ENCODE measurements at regions of chr19 and their contacts with region 1.

Region 1: GRCh38 chr19:41206926-41207750 is 11.9 kb upstream of the AXL start:
- DNase-seq: no peak
- H3K4me3 ChIP-seq: no peak overlapping the region
- CTCF ChIP-seq: no peak

Region 2: DNA sequence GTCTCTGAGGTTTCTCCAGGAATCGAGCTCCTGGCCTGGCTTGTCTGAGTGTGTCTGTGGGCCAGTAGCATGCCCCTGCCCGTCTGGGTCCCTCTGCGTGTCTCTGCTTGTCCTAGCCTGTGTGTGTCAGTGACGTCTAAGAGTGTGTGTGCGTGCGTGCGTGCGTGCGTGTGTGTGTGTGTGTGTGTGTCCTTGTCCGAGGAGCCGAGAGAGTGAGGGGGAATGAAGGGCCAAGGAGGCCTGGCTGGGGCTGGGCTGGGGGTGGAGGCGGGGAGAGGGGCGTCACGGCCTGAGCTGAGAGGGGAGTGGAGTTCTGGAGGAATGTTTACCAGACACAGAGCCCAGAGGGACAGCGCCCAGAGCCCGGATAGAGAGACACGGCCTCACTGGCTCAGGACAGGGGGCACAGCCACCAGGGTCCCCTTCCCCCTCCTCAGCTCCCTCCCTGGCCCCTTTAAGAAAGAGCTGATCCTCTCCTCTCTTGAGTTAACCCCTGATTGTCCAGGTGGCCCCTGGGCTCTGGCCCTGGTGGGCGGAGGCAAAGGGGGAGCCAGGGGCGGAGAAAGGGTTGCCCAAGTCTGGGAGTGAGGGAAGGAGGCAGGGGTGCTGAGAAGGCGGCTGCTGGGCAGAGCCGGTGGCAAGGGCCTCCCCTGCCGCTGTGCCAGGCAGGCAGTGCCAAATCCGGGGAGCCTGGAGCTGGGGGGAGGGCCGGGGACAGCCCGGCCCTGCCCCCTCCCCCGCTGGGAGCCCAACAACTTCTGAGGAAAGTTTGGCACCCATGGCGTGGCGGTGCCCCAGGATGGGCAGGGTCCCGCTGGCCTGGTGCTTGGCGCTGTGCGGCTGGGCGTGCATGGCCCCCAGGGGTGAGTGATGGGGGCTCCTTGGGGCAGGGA is 11.7 kb after region 1 on chr19 and contains the start of gene AXL:
- CTCF ChIA-PET with region 1: interaction called, 10 read pairs
- POLR2A ChIA-PET with region 1: interaction called, 4 read pairs
- DNase-seq: peak; percentile 63
- H3K4me3 ChIP-seq: peak within 1 kb of the TSS; percentile 90
- CTCF ChIP-seq: no peak

Region 3: DNA sequence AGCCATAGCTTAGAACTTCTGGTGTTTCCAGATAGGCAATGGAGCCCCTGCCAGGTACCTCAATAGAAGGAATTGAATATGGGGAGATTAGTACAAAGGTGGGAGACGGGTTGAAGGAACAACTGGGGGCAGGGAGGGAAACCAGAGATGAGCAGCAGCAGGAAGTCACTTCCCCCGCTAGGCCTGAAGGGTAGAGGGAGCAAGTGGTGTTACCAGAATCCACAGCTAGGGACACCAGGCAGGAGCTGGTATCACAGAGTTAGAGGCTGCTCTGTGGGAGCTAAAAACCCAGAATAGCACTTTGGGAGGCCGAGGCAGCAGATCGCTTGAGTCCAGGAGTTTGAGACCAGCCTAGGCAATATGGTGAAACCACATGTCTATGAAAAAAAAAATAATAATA is 41.8 kb after region 1 on chr19:
- CTCF ChIA-PET with region 1: interaction called, 12 read pairs
- POLR2A ChIA-PET with region 1: interaction called, 3 read pairs
- DNase-seq: no peak
- H3K4me3 ChIP-seq: no peak overlapping the region
- CTCF ChIP-seq: no peak

Region 4: DNA sequence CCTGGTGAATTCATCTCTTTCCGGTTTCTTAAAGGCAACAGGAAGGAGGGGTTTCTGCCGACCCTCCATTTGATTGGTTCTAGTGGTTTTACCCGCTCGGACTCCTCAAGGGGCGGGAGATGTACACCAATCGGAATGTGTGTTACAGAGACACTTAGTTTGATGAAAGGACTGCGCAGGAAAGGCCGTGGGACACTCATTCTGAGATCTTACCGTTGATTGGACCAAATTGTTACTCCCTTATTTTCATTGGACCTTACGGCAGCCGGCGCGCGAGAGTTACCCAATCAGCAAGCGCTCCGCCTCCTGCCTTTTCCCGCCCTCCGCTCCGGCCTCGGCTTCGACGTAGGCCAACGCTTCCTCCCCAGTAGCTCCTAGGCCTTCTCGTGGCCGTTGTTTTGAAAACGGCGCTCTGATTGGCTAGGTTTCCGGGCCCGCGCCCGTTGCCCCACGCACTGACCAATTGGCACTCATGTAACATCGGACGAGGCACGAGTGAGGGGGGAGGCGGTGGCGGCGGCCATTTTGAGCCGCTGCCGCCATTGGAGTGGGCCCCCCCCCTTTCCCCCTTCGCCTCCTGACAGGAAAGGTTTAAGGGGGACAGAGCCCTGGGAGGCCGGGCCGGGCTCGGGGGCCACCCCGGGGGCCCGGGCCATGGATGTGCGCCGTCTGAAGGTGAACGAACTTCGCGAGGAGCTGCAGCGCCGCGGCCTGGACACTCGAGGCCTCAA is 56.9 kb after region 1 on chr19 and contains the start of gene HNRNPUL1:
- CTCF ChIA-PET with region 1: interaction called, 205 read pairs
- POLR2A ChIA-PET with region 1: interaction called, 12 read pairs
- DNase-seq: peak; percentile 100
- H3K4me3 ChIP-seq: peak within 1 kb of the TSS; percentile 87
- CTCF ChIP-seq: peak; percentile 36

Region 5: GRCh38 chr19:41298348-41298964 is 91.3 kb after region 1 on chr19:
- CTCF ChIA-PET with region 1: interaction called, 20 read pairs
- POLR2A ChIA-PET with region 1: no interaction called
- DNase-seq: peak; percentile 37
- H3K4me3 ChIP-seq: no peak overlapping the region
- CTCF ChIP-seq: no peak

Region 6: GRCh38 chr19:41327576-41328156 is 120.5 kb after region 1 on chr19:
- CTCF ChIA-PET with region 1: no interaction called
- POLR2A ChIA-PET with region 1: no interaction called
- DNase-seq: no peak
- H3K4me3 ChIP-seq: no peak overlapping the region
- CTCF ChIP-seq: no peak

Region 7: DNA sequence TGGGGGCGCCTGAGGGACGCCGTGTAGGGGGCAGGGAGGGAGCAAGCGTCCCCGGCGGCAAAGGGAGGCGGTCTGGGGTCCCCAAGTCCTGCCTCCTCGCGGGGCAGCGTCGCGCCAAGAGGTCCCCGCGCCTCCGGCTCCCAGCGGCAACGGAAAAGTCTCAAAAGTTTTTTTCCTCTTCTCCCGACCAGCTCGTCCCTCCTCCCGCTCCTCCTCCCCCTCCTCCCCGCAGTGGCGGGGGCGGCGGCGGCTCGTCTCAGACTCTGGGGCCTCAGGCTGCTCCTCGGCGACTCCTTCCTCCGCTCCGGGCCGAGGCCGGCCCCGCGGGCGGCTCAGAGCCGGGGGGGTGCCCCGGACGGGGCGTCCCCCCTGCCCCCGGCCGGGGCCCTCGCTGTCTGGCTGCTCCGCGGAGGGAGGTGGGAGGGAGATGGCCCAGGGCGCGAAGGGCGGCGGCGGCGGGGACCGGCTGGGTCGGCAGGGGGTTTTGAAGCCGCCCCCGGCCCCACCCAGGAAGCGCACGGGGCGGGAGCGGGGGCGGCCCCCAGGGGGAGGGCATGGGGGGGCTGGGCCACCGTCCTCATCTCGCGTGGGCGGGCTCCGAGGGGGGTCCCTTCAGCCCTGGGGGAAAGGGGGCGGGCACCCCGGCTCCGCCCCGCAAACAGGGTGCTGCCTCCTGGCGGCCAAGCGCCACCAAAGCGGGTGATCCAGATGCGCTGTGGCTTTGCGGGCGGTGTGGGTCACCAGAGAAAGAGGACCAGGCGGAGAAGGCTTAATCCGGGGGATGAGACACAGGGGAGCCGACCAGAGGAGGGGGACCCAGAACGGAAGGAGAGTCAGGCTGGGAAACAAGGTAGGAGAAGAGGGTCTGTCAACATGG is 146.6 kb after region 1 on chr19 and contains the start of gene TGFB1:
- CTCF ChIA-PET with region 1: interaction called, 12 read pairs
- POLR2A ChIA-PET with region 1: no interaction called
- DNase-seq: no peak
- H3K4me3 ChIP-seq: peak within 1 kb of the TSS; percentile 87
- CTCF ChIP-seq: peak; percentile 98

Measured in AG04449 (cell line).